PC-9 (cell line): ENCODE measurements at regions of chr6 and their contacts with region 1.

Region 1: DNA sequence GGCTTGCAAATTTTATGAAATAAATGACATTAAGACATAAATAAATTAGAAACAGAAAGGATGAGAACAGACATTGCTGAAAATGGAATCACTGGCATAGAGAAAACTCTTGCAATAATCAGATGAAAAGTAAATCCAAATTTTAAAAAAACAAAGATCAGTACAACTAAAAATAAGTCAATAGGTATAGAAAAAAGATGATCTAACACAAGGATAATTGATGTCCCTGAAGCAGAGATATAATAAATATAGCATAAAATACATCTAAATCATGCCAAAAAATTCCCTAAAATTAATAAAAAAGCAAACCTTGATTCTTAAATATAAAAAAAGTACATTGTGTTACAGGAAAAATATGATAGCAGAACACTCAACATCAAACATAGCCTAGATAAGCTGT is 379.6 kb downstream of the SYNE1 start:
- DNase-seq: no peak
- H3K4me3 ChIP-seq: no peak overlapping the region
- H3K27ac ChIP-seq: no peak overlapping the region
- H3K4me1 ChIP-seq: no peaks in the 10 kb centered on the region
- H3K27me3 ChIP-seq: no peaks in the 10 kb centered on the region
- CTCF ChIP-seq: no peak

Region 2: DNA sequence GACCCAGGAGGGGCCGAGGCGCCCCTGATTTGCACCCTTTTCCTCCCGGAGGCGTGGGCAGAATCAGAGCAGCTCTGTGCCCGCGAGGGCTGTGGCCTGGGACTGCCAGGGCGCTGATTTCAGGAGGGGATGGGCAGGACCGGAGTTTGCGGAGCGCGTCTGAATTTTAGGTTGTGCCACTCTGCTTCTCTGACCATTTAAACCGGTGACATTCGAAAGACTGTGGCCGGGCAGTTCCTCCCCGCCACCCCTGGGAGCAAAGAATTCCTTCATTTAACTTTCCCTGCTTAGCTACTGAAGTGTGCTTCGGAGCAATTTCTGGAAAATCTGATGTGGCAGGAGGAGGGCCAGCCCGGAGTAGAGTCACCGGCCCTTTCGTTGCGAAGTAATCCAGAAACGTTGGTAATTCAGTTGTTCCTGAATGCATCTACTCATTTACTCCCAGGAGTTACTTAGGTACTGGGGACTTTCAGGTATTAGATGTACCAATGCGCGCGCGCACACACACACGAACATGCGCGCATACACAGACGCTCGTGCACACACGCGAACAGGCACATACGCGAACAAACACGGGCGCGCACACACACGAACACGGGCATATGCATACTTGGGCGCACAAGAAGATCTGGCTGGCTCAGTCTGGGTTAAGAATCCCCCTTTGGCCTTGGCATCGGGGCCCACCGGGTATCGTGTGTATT is 763.2 kb before region 1 on chr6:
- CTCF ChIA-PET with region 1: no interaction called
- POLR2A ChIA-PET with region 1: interaction called, 10 read pairs
- intact Hi-C with region 1: no loop called
- DNase-seq: peak; percentile 25 to 55
- H3K4me3 ChIP-seq: peak overlapping the region; percentile 80
- H3K27ac ChIP-seq: no peak overlapping the region
- H3K4me1 ChIP-seq: peaks cover 6% of the 10 kb centered on the region
- H3K27me3 ChIP-seq: no peaks in the 10 kb centered on the region
- CTCF ChIP-seq: no peak